Left lung (tissue), 14 donors: ENCODE measurements at regions of chr16 and their contacts with region 1.

Region 1: DNA sequence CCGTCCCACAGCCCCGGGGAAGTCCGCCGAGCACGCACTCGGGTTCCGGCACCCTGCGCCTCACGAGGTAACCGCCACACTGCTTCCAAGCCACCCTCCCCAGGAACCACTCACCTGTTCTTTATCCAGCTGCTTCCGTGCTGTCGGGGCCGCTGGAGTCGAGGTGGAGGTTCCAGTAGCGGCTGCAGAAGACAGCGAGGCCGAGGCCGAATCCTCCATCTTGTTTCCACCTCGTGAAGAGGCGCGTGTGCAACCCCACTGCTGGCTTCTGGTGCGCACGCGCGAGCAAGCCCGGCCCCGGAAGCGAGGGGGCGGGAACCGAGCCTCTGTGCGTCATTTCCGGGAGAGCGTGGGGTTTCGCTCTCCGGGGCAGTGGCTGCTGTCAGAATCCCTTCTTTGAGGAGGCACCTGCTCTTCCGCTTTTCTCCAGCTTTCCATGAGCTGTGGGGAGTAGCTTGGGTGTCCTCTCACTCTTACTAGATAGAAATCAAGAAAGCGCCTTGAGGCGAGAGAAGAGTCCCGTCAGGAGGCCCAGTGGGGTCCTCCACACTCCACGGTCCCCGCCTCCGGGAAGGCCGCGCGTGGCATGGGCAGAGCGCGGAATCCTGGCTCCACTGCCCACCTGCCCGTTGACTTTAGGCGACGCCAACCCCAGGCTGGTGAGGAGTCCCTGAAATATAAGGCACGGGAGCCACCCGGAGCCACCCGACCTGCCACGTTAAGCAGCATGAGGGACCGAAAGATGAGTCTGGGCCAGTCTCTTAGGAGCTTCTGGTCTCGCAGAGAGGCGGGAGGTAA is at the start of gene RSL1D1:
- DNase-seq: peak; percentile 91 to 96 (median 94)
- ATAC-seq: peak; percentile 97
- H3K4me3 ChIP-seq: peak within 1 kb of the TSS; percentile 86 to 91
- H3K27ac ChIP-seq: peak within 1 kb of the TSS; percentile 83 to 86
- H3K4me1 ChIP-seq: peaks cover 0 to 49% of the 10 kb centered on the region in 2 donors
- H3K27me3 ChIP-seq: no peaks in the 10 kb centered on the region
- CTCF ChIP-seq: no peak
- polyA plus RNA-seq, gene RSL1D1: 236 to 274 (median 242) TPM

Region 2: DNA sequence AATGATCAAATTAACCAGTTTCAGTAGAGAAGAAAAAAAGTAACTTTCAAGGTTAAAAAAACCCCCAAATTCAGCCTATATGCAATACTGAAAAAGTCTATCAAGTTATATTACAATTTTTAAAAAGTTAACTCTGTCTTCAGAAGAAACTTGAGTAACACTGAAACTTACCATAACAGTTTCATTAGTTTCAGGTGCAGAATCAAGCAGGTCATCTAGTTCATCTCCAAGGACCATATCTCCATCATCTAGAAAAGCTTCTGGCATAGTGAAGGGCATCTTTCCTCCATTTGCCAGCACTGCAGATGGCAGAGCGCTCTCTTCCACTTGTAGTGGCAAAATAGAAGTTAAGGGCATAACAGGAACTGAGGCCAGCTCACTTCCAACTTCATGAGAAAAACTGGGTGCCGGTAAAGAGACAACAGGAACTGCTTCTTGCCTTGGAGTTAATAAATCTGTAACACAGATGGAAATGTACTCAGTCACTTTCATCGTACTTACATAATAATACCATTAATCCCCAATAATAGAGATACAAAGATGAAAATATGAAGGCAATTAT is 77.3 kb before region 1 on chr16:
- intact Hi-C with region 1: loop called in 1 of 2 experiments (anchors 10 kb)
- DNase-seq: no peak
- ATAC-seq: no peak
- H3K4me3 ChIP-seq: no peak overlapping the region
- H3K27ac ChIP-seq: no peak overlapping the region
- H3K4me1 ChIP-seq: peaks cover 0 to 6% of the 10 kb centered on the region in 2 donors
- H3K27me3 ChIP-seq: no peaks in the 10 kb centered on the region
- CTCF ChIP-seq: no peak

Region 3: DNA sequence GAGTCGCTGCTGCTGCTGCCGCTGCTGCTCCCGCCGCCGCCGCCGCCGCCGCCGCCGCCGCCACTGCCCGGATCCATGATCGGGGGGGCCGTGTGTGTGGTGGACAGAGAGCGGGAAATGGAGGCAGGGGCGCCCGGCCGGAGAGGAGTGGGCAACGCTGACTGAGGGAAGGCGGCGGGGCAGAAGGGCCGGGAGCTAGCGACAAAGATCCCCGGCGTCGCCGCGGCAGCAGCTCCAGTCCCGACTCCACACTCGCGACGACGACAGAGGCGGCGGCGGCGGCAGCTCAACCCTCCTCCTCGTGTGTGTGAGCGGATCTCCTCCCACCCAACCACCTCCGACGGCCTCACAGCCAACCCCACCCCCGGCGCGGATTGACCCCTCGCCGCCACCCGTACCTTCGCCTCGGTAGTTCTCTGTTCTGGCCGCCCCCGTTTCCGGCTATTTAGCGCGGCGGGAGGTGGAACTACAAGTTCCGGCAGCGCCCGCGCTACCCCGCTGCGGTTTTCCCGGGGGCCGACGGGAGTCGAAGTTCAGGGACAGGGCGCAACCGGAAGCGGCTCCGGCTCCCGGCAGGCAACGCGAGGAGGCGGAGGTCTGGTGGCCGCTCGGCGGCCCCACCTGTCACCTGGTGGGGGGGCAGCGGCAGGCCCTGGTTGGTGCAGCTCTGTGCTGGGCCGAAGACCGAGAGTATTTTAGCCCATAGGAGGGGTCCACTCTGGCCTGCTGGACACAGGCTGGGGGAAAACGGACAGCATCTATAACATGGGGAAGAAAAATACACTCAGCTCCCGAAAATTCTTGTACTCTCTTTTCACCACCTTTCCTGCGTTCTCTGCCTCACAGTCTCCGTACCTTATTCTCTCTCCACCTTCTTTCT is 64.4 kb after region 1 on chr16 and contains the start of gene GSPT1:
- intact Hi-C with region 1: loop called in 1 of 2 experiments (anchors 10 kb)
- DNase-seq: peak; percentile 97 to 100 (median 99)
- ATAC-seq: peak; percentile 93
- H3K4me3 ChIP-seq: peak within 1 kb of the TSS; percentile 85 to 86
- H3K27ac ChIP-seq: peak within 1 kb of the TSS; percentile 94 to 95
- H3K4me1 ChIP-seq: peaks cover 13 to 38% of the 10 kb centered on the region in 2 donors
- H3K27me3 ChIP-seq: no peaks in the 10 kb centered on the region
- CTCF ChIP-seq: peak in 1 of 2 donors; percentile 74
- polyA plus RNA-seq, gene GSPT1: 93.5 to 109 (median 105) TPM